A673 (cell line): ENCODE measurements at regions of chr20 and their contacts with region 1.

Region 1: GRCh38 chr20:49186535-49187329 is 1.4 kb downstream of the STAU1 start:
- DNase-seq: peak; percentile 62
- H3K4me3 ChIP-seq: peak overlapping the region; percentile 58
- H3K27ac ChIP-seq: peak overlapping the region; percentile 87
- H3K4me1 ChIP-seq: peaks cover 18% of the 10 kb centered on the region
- H3K27me3 ChIP-seq: no peaks in the 10 kb centered on the region
- CTCF ChIP-seq: no peak

Region 2: DNA sequence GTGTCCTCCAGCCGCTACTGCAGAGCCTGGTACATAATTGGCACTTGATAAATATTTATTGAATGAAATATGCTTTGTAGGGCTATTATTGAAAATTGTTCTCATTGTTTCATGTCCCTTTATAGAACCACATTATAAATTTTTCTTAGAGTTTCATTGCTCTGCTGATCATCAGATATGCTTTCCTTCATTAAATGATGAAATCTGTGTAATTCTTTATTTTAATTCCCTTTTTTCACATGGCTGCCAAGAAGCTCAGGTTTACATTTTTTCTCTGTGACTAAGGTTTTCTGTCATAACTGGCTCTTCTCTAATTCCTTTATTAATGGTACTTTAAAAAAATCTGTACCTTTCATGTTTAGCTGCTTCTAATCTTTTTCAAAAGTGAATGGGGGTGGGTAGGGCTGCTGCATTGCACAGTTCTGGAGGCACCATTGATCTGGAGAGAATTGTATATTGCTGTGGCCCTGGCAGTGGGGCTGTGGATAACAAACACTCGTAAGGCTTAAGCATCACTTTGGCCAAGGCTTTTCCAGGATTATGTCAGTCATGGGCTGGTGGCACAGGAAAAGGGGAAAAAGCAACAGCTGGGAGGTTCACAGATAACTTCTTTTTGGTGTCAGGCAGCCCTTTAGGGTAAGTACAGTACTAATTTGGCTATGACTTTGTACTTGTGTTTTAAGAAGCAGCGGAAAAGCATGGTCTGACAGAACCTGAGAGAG is 221.4 kb before region 1 on chr20:
- CTCF ChIA-PET with region 1: no interaction called
- POLR2A ChIA-PET with region 1: no interaction called
- intact Hi-C with region 1: no loop called
- DNase-seq: no peak
- H3K4me3 ChIP-seq: no peak overlapping the region
- H3K27ac ChIP-seq: no peak overlapping the region
- H3K4me1 ChIP-seq: no peaks in the 10 kb centered on the region
- H3K27me3 ChIP-seq: no peaks in the 10 kb centered on the region
- CTCF ChIP-seq: no peak

Region 3: DNA sequence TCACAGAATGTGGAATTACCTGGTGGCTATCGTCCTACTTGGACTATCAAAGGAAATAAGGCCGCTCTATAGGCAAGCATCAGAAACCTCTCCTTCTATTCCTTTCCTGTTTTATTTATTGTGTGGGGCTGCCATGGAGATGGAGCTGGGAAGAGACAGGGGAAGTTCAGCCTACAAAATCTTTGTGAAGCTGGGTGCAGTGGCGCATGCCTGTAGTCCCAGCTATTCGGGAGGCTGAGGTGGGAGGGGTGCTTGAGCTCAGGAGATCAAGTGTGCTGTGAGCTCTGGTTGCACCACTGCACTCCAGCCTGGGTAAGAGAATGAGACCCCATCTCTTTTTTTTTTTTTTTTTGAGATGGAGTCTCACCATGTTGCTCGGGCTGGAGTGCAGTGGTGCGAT is 235.4 kb after region 1 on chr20:
- CTCF ChIA-PET with region 1: no interaction called
- POLR2A ChIA-PET with region 1: interaction called, 17 read pairs
- intact Hi-C with region 1: no loop called
- DNase-seq: no peak
- H3K4me3 ChIP-seq: no peak overlapping the region
- H3K27ac ChIP-seq: no peak overlapping the region
- H3K4me1 ChIP-seq: no peaks in the 10 kb centered on the region
- H3K27me3 ChIP-seq: peaks cover 17% of the 10 kb centered on the region
- CTCF ChIP-seq: no peak